ENCODE measurements at regions of chr17 and their contacts with region 1.

Region 1: GRCh38 chr17:3636154-3636907 is at the starts of genes CTNS and SHPK:
- DNase-seq: peak; percentile 97 to 98 (median 98)
- ATAC-seq: peak; percentile 98 to 99 (median 98)
- H3K4me3 ChIP-seq: peak within 1 kb of the TSS; percentile 78 to 100 (median 98)
- H3K27ac ChIP-seq: peak within 1 kb of the TSS; percentile 93 to 99 (median 96)
- H3K4me1 ChIP-seq: peaks cover 0 to 54% (median 33%) of the 10 kb centered on the region in 12 donors
- H3K27me3 ChIP-seq: no peaks in the 10 kb centered on the region
- CTCF ChIP-seq: peak in 2 of 12 donors; percentile 8 to 17
- POLR2A ChIP-seq: peak; percentile 25 to 76
- total RNA-seq, gene CTNS: 6.2 to 19.0 (median 8.7) TPM
- total RNA-seq, gene SHPK: 2.5 to 7.3 (median 3.6) TPM

Region 2: DNA sequence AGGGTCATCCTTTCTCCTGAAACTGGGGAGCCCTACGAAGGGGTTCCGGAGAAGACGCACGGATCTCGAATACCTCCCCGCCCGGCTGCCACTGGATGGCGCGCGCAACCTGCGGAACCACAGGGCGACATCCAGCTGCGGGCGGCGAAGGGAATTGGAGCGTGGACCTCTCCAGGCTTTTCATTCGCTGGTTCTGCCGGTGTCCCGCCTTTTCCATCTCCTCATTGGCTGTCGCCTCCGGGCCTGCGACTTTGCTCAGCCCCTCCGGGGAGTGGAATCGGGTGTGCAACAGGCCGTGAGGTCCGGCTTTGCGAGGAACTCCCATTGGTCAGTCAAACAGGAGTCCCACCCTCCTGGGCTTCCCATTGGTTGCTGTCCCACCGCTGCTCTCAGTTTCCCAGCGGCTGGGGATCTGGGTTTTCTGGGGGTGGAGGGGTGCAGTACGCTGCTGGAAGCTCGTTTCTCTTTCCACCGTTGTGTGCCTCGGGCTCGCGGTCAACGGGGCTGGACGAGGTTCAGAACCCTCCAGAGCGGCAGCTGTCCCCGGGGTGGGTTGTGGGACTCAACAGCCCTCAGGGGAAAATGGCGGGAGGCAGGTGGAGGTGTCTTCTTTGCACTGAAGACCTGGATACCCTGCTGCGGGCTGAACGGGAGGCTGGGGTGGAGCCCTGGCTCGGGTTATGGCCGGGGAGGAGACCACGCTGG is 587.4 kb before region 1 on chr17:
- intact Hi-C with region 1: loop called in 2 of 10 experiments (anchors 2 to 10 kb)
- DNase-seq: peak; percentile 96 to 98 (median 97)
- ATAC-seq: peak; percentile 99 to 100 (median 100)
- H3K4me3 ChIP-seq: peak overlapping the region; percentile 39 to 87 (median 70)
- H3K27ac ChIP-seq: peak overlapping the region in 11 of 12 donors; percentile 52 to 85 (median 73)
- H3K4me1 ChIP-seq: peaks cover 0 to 14% (median 4%) of the 10 kb centered on the region in 12 donors
- H3K27me3 ChIP-seq: no peaks in the 10 kb centered on the region
- CTCF ChIP-seq: peak; percentile 72 to 94 (median 84)
- POLR2A ChIP-seq: peak in 1 of 2 donors; percentile 72

Region 3: GRCh38 chr17:3535253-3535995 is 100.9 kb before region 1 on chr17:
- intact Hi-C with region 1: loop called in 3 of 10 experiments (anchors 10 kb)
- DNase-seq: peak; percentile 53 to 76 (median 69)
- ATAC-seq: peak; percentile 57 to 87 (median 74)
- H3K4me3 ChIP-seq: peak overlapping the region in 11 of 12 donors; percentile 15 to 60 (median 48)
- H3K27ac ChIP-seq: peak overlapping the region in 9 of 12 donors; percentile 22 to 73 (median 62)
- H3K4me1 ChIP-seq: peaks cover 0 to 19% (median 8%) of the 10 kb centered on the region in 12 donors
- H3K27me3 ChIP-seq: no peaks in the 10 kb centered on the region
- CTCF ChIP-seq: peak; percentile 33 to 83 (median 62)
- POLR2A ChIP-seq: no peak

Region 4: DNA sequence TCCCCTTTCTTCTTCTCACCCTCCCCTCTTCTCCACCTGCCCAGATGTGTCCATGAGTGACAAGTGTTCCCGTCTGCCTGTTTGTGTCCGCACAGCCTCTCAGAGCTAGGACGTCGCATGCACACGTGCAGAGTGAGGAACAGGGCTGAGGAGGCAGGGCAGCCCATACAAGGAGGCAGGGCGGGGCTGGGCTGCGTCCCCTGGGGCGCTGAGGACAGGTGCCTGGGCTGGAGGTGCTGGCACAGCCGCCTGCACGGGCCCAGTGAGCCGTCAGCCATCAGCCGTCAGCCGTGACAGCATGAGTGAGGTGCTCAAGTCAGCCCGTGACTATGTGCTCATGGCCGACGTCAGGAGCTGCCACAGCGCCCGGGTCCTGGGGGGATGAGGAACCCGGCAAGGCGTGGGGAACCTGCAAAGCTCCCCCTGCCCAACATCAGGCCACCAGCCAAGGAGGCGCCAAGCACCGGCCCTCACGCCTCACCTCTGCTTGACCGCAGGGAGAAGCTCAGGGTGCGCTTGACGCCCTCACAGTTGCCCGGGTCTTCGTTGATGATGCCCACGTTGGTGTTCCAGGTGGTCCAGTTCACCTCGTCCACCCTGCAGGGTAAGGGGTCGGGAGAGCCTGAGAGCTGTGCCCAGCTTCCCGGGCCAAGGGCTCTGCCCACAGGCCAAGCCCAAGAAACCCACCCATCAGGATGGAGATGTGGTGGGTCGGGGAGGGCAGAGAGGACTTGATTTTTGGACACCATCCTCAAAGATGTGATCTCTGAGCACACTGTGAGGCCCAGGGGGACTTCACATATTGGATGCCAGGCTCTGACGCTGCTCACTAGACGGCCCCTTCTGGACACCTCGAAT is 65.1 kb before region 1 on chr17:
- intact Hi-C with region 1: no loop called
- DNase-seq: peak in 1 of 5 donors; percentile 10
- ATAC-seq: peak in 1 of 4 donors; percentile 22
- H3K4me3 ChIP-seq: no peak overlapping the region
- H3K27ac ChIP-seq: no peak overlapping the region
- H3K4me1 ChIP-seq: no peaks in the 10 kb centered on the region
- H3K27me3 ChIP-seq: no peaks in the 10 kb centered on the region
- CTCF ChIP-seq: no peak
- POLR2A ChIP-seq: no peak

Region 5: DNA sequence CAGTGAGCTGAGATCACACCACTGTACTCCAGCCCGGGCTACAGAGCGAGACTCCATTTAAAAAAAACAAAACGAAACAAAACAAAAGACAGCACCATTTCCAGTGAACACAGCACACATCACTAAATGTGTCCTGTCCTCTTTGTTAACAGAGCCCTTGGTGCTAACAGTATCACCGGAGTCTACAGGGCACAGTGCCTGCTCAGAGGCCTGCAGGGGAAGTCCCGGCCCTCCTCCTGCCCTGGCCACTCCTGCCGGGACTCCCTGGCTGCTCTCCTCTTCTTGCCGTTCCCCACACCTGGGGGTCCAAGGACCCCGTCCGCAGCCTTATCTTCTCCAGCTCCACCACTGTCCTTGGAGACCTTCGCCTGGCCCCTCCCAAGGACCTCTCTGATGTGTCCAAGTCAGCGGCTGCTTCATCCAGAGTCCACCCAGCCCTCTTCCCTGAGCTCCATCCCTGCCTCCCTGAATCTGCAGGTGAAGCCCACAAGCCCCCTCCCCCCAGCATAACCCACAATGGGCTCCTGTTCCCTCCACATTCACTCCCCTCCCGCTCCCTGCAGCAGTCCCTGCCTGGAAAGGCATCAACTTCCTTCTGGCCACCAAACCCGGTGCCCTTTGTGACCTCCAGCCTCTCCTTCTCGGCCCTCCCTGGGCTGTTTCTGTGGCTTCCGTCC is 35.7 kb before region 1 on chr17:
- intact Hi-C with region 1: loop called in 1 of 10 experiments (anchors 1 kb)
- DNase-seq: no peak
- ATAC-seq: peak in 3 of 4 donors; percentile 33 to 63 (median 37)
- H3K4me3 ChIP-seq: no peak overlapping the region
- H3K27ac ChIP-seq: no peak overlapping the region
- H3K4me1 ChIP-seq: no peaks in the 10 kb centered on the region
- H3K27me3 ChIP-seq: no peaks in the 10 kb centered on the region
- CTCF ChIP-seq: no peak
- POLR2A ChIP-seq: no peak

Region 6: DNA sequence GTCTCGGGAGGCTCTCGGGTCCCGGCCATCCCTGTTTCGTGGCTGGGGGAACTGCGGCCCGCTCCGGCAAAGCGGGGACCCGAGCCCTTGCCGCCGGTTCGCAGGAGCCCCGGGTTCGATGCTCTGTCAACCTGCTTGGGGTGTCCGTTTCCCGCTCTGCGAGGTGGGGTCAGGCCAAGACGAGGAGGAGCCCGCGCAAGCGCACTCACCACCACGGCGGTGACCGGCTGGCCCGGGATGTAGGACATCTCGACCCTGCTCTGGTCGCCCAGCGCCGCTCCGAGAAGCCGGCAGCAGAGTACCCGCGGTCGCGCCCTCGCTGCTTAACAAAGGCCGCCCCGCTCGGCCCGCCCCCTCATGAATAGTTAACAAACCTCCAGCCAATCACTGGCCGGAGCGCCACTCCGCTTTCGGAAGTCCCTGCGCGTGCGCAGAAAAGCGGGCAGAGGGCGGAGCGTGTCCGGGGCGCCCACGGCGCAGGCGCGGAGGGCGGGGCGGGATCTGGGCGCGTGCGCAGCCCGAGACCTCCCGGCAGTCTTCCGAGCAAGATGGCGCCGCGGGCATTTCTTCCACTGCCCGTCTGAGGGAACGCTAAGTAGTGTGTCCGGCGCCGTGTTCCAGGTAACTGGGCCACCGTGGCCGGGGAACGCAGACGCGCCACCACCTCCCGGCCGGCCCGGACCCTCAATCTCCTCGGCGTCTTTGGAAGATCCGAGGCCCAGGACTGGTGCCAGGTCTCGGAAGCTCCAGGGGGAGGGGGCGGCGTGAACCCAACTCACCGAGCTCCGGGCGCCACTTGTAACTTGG is 32.2 kb after region 1 on chr17 and contains the starts of genes EMC6 and TAX1BP3:
- intact Hi-C with region 1: loop called in 2 of 10 experiments (anchors 1 to 2 kb)
- DNase-seq: peak; percentile 98 to 100 (median 99)
- ATAC-seq: peak; percentile 86 to 93 (median 90)
- H3K4me3 ChIP-seq: peak within 1 kb of the TSS; percentile 61 to 100 (median 88)
- H3K27ac ChIP-seq: peak within 1 kb of the TSS; percentile 91 to 100 (median 99)
- H3K4me1 ChIP-seq: peaks cover 4 to 47% (median 36%) of the 10 kb centered on the region in 12 donors
- H3K27me3 ChIP-seq: no peaks in the 10 kb centered on the region
- CTCF ChIP-seq: peak in 2 of 12 donors; percentile 2 to 3
- POLR2A ChIP-seq: peak; percentile 98 to 100
- total RNA-seq, gene EMC6: 24.2 to 78.2 (median 51.9) TPM
- total RNA-seq, gene TAX1BP3: 122 to 291 (median 177) TPM

Measured in heart left ventricle (tissue), 16 donors.